K562 (cell line): ENCODE measurements at regions of chr10 and their contacts with region 1.

Region 1: DNA sequence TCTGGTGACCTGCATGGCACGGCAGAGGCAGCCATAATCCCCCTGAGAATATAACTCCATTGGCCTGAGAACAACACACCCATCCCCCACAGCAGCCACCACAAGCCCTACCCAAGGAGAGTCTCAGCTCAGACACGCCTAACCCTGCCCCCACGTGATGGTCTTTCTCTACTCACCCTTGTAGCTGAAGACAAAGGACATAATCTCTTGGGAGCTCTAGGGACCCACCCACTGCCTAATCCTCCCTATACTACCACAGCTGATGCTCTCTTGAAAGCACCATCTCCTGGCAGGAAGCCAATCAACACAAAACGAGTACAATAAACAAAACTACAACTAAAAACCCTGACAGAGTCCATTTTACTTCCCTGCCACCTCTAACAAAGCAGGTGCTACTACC is 30.7 kb upstream of the HPSE2 start:
- DNase-seq: no peak
- ATAC-seq: no peak
- H3K4me3 ChIP-seq: no peak overlapping the region
- H3K27ac ChIP-seq: no peak overlapping the region
- H3K4me1 ChIP-seq: no peaks in the 10 kb centered on the region
- H3K27me3 ChIP-seq: no peaks in the 10 kb centered on the region
- CTCF ChIP-seq: no peak
- EP300 ChIP-seq: no peak
- POLR2A ChIP-seq: no peak
- RAD21 ChIP-seq: no peak

Region 2: DNA sequence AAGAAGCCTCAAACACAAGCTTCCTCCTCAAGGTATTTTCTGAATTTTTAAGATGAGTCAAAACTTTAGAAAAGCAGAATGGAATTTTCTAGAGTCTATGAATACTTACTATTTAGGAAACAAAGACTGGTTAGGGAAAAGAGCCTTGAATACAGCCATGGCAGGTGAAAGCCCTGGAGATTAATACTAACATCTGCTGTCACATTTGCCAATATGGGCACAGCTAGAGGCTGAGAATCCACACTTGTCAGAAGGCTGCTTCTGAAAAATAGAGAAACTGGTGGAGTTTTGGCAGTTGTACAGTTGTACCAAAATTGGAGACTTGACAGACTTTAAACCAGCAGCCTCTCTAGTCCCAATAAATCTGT is 38.5 kb after region 1 on chr10:
- CTCF ChIA-PET with region 1: no interaction called
- POLR2A ChIA-PET with region 1: interaction called, 4 read pairs
- in situ Hi-C with region 1: loop called (anchors 5 kb)
- intact Hi-C with region 1: no loop called
- DNase-seq: no peak
- ATAC-seq: no peak
- H3K4me3 ChIP-seq: no peak overlapping the region
- H3K27ac ChIP-seq: no peak overlapping the region
- H3K4me1 ChIP-seq: no peaks in the 10 kb centered on the region
- H3K27me3 ChIP-seq: no peaks in the 10 kb centered on the region
- CTCF ChIP-seq: no peak
- EP300 ChIP-seq: no peak
- POLR2A ChIP-seq: no peak
- RAD21 ChIP-seq: no peak